K562 (cell line): ENCODE measurements at regions of chr9 and their contacts with region 1.

Region 1: GRCh38 chr9:97468658-97469448 is 32.6 kb upstream of the TMOD1 start:
- DNase-seq: peak; percentile 65 to 88 (median 78)
- ATAC-seq: peak; percentile 100
- H3K4me3 ChIP-seq: no peak overlapping the region
- H3K27ac ChIP-seq: no peak overlapping the region
- H3K4me1 ChIP-seq: peaks cover 0 to 8% of the 10 kb centered on the region in 2 experiments; a peak in 2 of 5 replicates
- H3K27me3 ChIP-seq: no peaks in the 10 kb centered on the region
- CTCF ChIP-seq: peak; percentile 90 to 96 (median 96)
- EP300 ChIP-seq: no peak
- POLR2A ChIP-seq: no peak
- RAD21 ChIP-seq: peak; percentile 92 to 97

Region 2: GRCh38 chr9:97598461-97599288 is 129.8 kb after region 1 on chr9:
- CTCF ChIA-PET with region 1: interaction called, 24 read pairs
- POLR2A ChIA-PET with region 1: interaction called, 6 read pairs
- in situ Hi-C with region 1: loop called (anchors 5 kb)
- intact Hi-C with region 1: loop called (anchors 1 kb)
- DNase-seq: peak; percentile 56 to 84 (median 63)
- ATAC-seq: peak; percentile 96
- H3K4me3 ChIP-seq: no peak overlapping the region
- H3K27ac ChIP-seq: no peak overlapping the region
- H3K4me1 ChIP-seq: peaks cover 0 to 6% of the 10 kb centered on the region in 2 experiments; a peak in 3 of 5 replicates
- H3K27me3 ChIP-seq: no peaks in the 10 kb centered on the region
- CTCF ChIP-seq: peak; percentile 80 to 90 (median 86)
- EP300 ChIP-seq: no peak
- POLR2A ChIP-seq: no peak
- RAD21 ChIP-seq: peak; percentile 70 to 83

Region 3: DNA sequence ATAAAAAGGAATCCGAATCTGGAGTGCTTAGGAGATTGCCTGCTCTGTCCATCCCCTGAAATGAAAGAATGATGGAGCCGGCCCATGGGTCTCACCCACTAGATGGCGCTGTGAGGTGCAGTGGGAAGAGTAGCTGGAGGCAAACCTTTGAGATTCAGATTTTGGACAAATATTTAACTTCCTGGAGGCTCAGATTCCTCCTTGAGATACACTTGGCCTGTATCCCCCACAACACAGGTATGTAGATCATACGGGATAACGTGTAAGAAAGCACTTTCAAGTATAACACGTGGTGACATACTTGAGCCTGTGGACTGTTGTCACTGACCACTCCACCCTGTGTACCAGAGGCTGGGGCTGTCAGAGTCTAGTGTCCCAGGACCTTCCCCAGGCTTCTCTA is 421.2 kb after region 1 on chr9:
- CTCF ChIA-PET with region 1: no interaction called
- POLR2A ChIA-PET with region 1: no interaction called
- in situ Hi-C with region 1: no loop called
- intact Hi-C with region 1: loop called (anchors 10 kb)
- DNase-seq: peak; percentile 69 to 83 (median 80)
- ATAC-seq: peak; percentile 92
- H3K4me3 ChIP-seq: no peak overlapping the region
- H3K27ac ChIP-seq: no peak overlapping the region
- H3K4me1 ChIP-seq: no peaks in the 10 kb centered on the region
- H3K27me3 ChIP-seq: peaks cover 15 to 27% of the 10 kb centered on the region in 2 experiments; a peak in 4 of 5 replicates
- CTCF ChIP-seq: peak; percentile 83 to 96 (median 85)
- EP300 ChIP-seq: no peak
- POLR2A ChIP-seq: no peak
- RAD21 ChIP-seq: peak in 1 of 2 experiments; percentile 62; a peak in 2 of 4 replicates